Left ventricle myocardium inferior (tissue), 1 donor: ENCODE measurements at regions of chr12 and their contacts with region 1.

Region 1: GRCh38 chr12:55738123-55739024 is 4.5 kb upstream of the GDF11 start:
- DNase-seq: peak; percentile 80
- H3K4me3 ChIP-seq: peak overlapping the region; percentile 66
- H3K27ac ChIP-seq: peak overlapping the region; percentile 75
- H3K4me1 ChIP-seq: peaks cover 26% of the 10 kb centered on the region
- H3K27me3 ChIP-seq: no peaks in the 10 kb centered on the region
- CTCF ChIP-seq: peak; percentile 91

Region 2: DNA sequence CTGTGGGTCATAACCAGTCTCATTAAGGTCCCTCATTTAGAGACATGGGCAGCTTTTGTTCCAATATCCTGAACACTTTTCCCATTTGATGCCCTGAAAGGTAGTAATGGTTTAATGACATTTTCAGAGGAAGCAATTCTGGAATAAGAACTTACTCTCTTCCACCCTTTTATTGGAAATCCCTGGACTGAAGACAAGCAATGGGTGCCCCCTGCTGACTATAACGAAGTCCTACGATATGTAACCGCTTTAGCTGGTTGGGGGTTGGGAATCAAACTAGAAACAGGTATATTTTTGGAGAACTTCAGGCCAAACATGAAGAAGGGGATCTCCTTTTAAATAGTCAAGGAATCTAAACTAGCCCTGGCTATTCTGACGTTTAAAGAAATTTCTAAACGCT is 58.7 kb after region 1 on chr12:
- intact Hi-C with region 1: loop called (anchors 10 kb)
- DNase-seq: no peak
- H3K4me3 ChIP-seq: no peak overlapping the region
- H3K27ac ChIP-seq: no peak overlapping the region
- H3K4me1 ChIP-seq: no peaks in the 10 kb centered on the region
- H3K27me3 ChIP-seq: no peaks in the 10 kb centered on the region
- CTCF ChIP-seq: peak; percentile 62